Left ventricle myocardium superior (tissue), 1 donor: ENCODE measurements at regions of chr12 and their contacts with region 1.

Region 1: GRCh38 chr12:8890313-8891085 is 23.8 kb upstream of the PHC1 start:
- DNase-seq: peak; percentile 37
- ATAC-seq: peak; percentile 87

Region 2: GRCh38 chr12:8681041-8681902 is 209.2 kb before region 1 on chr12:
- intact Hi-C with region 1: loop called (anchors 5 kb)
- DNase-seq: no peak
- ATAC-seq: peak; percentile 59